ENCODE measurements at regions of chr6 and their contacts with region 1.

Region 1: DNA sequence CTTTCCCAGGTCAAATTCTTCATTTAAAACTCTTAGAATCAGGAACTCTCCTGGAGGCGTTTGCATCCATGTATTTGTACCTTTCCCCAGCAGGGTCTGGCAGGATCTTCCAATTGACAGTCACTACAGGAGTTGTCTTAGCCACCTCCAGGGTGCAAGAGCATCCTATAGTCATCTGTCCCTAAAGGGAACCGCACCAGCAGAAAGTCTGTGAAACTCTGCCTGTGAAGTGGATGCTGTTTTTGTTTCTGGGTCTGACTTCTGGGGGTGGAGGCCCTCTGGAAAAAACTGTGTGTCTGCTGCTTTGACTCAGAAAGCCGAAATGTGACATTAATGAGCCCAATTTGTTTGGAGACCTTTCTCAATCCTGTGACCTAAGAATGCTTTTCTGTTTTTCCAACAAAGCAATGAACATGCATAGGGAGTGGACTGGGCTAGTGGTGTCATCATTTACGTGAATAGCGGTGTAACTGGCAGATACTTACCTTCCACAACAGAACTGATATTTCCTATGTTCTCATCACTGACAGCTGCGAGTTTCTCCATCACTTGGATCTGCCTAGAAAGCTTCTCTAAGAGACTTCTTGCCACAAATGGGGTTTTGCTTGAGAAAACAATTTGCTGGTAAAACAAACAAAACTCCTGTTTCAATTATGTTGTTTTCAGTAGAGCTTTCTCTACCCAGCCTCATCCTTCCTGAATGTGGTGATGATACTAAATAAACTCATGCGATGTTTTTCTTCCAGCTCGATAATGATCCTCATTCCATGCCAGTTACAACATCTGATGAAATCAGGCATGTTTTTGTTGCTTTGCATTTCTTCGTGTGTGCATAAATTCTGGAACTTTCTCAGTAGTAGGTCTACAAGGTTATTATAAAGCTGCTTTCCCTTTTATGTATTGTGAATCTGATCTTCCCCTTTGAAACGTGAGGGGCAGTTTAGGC is 33.3 kb upstream of the ARMH2 start:
- DNase-seq: no peak
- ATAC-seq: no peak
- H3K4me3 ChIP-seq: no peak overlapping the region
- H3K4me3 Mint-ChIP-seq: peak overlapping the region in 1 of 3 donors; percentile 17
- H3K27ac ChIP-seq: no peak overlapping the region
- H3K27ac Mint-ChIP-seq: peak overlapping the region; percentile 61 to 64
- H3K4me1 ChIP-seq: peaks cover 0 to 11% of the 10 kb centered on the region in 2 experiments
- H3K4me1 Mint-ChIP-seq: peaks cover 46 to 51% (median 50%) of the 10 kb centered on the region in 3 donors
- H3K27me3 ChIP-seq: no peaks in the 10 kb centered on the region
- H3K27me3 Mint-ChIP-seq: no peaks in the 10 kb centered on the region

Region 2: GRCh38 chr6:24844903-24845302 is 12.9 kb after region 1 on chr6:
- CTCF ChIA-PET with region 1: interaction called in 1 of 2 experiments, 5 read pairs
- POLR2A ChIA-PET with region 1: interaction called in 1 of 2 experiments, 12 read pairs
- DNase-seq: no peak
- ATAC-seq: no peak
- H3K4me3 ChIP-seq: no peak overlapping the region
- H3K4me3 Mint-ChIP-seq: no peak overlapping the region
- H3K27ac ChIP-seq: peak overlapping the region; percentile 42
- H3K27ac Mint-ChIP-seq: peak overlapping the region; percentile 75 to 78
- H3K4me1 ChIP-seq: peaks cover 20 to 50% of the 10 kb centered on the region in 2 experiments
- H3K4me1 Mint-ChIP-seq: peaks cover 79 to 88% (median 88%) of the 10 kb centered on the region in 3 donors
- H3K27me3 ChIP-seq: no peaks in the 10 kb centered on the region
- H3K27me3 Mint-ChIP-seq: no peaks in the 10 kb centered on the region